ENCODE measurements at regions of chr19 and their contacts with region 1.

Region 1: DNA sequence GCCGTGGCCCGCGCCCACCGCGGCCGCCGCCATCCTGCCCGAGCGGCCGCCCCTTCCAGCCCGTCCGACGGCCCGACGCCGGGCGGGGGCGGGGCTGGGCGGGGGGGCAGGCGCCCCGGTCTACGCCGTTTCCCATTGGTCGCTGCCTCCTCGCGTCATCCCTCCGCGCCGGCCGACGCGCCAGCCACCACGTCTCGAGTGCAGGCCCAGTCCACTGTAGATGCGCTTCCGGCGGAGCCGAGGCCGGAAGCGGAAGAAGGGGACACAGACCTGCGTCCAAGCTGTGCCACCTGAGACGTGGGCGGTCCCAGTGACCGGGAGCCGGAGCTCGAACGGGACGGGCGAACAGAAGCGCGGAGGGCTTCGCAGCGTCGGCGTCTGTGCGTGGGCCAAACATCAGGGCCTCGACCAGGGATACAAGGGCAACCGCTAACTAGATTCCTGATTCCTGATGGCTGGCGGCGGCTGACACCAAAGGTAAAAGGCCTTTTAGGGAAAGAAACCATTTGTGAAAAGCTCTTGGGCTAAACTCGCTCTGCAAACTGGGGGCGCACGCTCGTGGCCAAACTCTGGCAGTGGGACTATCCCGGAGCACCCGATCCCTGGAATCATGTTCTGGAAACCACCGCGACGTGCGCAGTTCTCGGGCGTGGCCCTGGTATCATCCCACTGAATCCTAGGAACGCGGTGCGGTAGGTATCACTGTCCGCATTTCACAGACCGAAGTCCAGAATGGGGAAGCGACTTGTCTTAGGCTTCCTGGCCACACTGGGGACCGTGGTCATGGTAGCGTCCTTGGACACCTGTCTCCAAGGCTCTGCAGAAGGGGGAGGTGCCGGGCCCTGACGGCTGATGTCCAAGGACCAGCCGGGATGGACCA is at the start of gene SLC35E1:
- DNase-seq: peak; percentile 96 to 97
- H3K4me3 ChIP-seq: peak within 1 kb of the TSS; percentile 80 to 94 (median 84)
- H3K27ac ChIP-seq: peak within 1 kb of the TSS; percentile 90 to 92
- H3K4me1 ChIP-seq: peaks cover 4 to 26% of the 10 kb centered on the region in 2 donors
- H3K27me3 ChIP-seq: no peaks in the 10 kb centered on the region
- CTCF ChIP-seq: no peak
- POLR2A ChIP-seq: peak; percentile 67
- total RNA-seq, gene SLC35E1: 33.0 to 44.9 (median 39.2) TPM

Region 2: GRCh38 chr19:16497837-16498236 is 74.7 kb before region 1 on chr19:
- intact Hi-C with region 1: loop called (anchors 2 kb)
- DNase-seq: no peak
- H3K4me3 ChIP-seq: no peak overlapping the region
- H3K27ac ChIP-seq: no peak overlapping the region
- H3K4me1 ChIP-seq: no peaks in the 10 kb centered on the region
- H3K27me3 ChIP-seq: no peaks in the 10 kb centered on the region
- CTCF ChIP-seq: no peak
- POLR2A ChIP-seq: no peak